Posterior cingulate gyrus (tissue), 11 donors: ENCODE measurements at regions of chr1 and their contacts with region 1.

Region 1: GRCh38 chr1:145908653-145909052 is 1.2 kb downstream of the ITGA10 start:
- DNase-seq: no peak

Region 2: GRCh38 chr1:145601593-145601992 is 307.1 kb before region 1 on chr1:
- intact Hi-C with region 1: no loop called
- DNase-seq: no peak

Region 3: GRCh38 chr1:145845514-145846161 is 63.0 kb before region 1 on chr1 and contains the start of gene NUDT17:
- intact Hi-C with region 1: loop called (anchors 5 kb)
- DNase-seq: peak; percentile 43 to 95 (median 76)

Region 4: DNA sequence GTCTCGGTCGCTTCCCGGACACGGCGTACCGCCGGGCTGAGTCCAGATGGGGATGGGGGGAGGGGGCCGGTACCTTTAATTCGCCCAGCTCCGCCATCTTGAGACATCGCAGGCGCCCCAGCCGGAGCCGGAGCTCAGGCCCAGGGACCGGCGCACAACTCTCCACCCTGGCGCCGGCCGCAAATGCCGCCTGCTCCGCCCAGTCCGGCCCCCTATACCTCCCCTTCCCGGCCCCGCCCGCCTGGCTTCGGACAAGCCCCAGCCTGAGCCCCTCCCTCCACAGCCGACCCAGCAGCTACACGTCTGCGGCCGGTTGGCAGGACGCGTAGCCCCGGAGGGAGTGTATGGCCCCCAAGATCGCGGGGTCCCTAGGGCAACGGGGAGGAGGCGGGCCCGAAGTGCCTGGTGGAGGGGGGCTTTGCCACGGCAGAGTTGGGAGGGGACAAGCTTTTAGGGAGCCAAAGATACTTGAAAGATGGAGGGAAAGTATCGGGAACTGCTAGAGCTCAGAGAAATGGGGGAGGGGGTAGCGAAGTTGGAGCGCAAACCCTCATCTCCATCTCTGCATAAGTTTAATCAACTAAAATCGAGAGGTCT is 49.7 kb before region 1 on chr1 and contains the start of gene PIAS3:
- intact Hi-C with region 1: no loop called
- DNase-seq: peak; percentile 83 to 98 (median 90)

Region 5: DNA sequence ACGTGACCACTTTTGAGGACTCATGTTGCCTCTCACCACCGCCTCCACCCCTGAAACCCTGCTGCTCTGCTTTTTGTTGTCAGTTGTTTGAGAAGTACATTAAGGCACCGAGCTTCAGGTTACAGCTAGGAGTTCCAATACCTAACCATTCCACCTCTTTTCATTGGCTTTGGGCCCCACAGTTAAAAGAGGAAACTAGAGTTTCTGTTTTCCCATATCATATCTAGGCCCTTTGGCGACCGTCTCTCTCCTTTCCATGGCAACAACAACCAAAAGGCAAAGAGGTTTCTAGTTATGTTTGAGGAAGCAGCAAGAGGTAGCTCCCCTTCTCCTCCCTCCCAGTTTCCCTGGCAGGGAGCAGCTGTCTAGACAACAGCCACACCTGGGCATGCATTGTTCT is 28.9 kb before region 1 on chr1:
- intact Hi-C with region 1: no loop called
- DNase-seq: no peak

Region 6: GRCh38 chr1:145891587-145892485 is 16.8 kb before region 1 on chr1:
- intact Hi-C with region 1: loop called (anchors 1 kb)
- DNase-seq: peak; percentile 85 to 98 (median 94)

Region 7: GRCh38 chr1:145972580-145972979 is 63.9 kb after region 1 on chr1:
- intact Hi-C with region 1: loop called (anchors 5 kb)
- DNase-seq: no peak

Region 8: GRCh38 chr1:146036965-146037646 is 128.5 kb after region 1 on chr1:
- intact Hi-C with region 1: no loop called
- DNase-seq: peak; percentile 71 to 95 (median 76)